ENCODE measurements at regions of chr12 and their contacts with region 1.

Region 1: DNA sequence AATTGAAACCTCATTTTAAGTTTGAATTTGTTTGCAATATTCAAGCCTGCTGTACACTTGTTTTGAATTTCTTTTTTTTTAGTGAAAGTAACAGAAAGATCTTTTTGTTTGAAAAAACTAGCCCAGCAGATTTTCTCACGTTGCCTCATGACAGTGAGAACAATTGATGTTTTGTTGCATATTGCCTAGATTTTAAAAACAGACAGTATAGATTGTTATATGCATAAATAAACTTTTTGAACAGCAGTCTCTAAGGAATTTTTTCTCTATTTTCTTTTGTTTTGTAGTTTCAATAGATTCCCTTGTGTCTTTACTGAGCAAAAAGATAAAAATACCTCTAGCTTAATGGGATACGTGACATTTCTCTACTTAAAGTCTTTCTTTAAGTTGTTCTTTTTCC is 15.4 kb downstream of the OR6C6 start:
- DNase-seq: no peak
- ATAC-seq: no peak
- H3K4me3 ChIP-seq: no peak overlapping the region
- H3K27ac ChIP-seq: no peak overlapping the region
- H3K4me1 ChIP-seq: no peaks in the 10 kb centered on the region
- H3K27me3 ChIP-seq: no peaks in the 10 kb centered on the region
- CTCF ChIP-seq: no peak
- EP300 ChIP-seq: no peak
- POLR2A ChIP-seq: no peak
- RAD21 ChIP-seq: no peak

Region 2: DNA sequence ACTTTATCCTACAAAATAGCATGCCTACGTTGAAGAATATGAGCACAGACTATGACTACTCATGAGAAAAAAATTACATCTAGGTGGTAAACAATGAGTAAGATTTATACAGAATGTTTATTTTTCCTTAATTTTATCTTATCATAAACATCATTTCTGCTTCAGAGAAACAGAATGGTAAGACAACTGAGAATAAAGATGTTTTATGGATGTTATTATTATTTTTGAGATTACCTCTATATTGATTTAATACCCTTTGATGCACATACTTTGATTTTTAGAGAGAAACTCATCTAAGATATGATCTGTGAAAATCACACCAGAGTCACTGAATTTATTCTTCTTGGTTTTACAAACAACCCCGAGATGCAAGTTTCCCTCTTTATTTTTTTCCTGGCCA is 60.3 kb before region 1 on chr12 and contains the start of gene OR10A7:
- CTCF ChIA-PET with region 1: no interaction called
- POLR2A ChIA-PET with region 1: no interaction called
- in situ Hi-C with region 1: no loop called
- intact Hi-C with region 1: loop called (anchors 2 kb)
- DNase-seq: no peak
- ATAC-seq: no peak
- H3K4me3 ChIP-seq: no peak within 1 kb of the TSS
- H3K27ac ChIP-seq: no peak within 1 kb of the TSS
- H3K4me1 ChIP-seq: no peaks in the 10 kb centered on the region
- H3K27me3 ChIP-seq: no peaks in the 10 kb centered on the region
- CTCF ChIP-seq: no peak
- EP300 ChIP-seq: no peak
- POLR2A ChIP-seq: no peak
- RAD21 ChIP-seq: no peak
- polyA plus RNA-seq, gene OR10A7: not detected

Measured in K562 (cell line).